ENCODE measurements at regions of chr14 and their contacts with region 1.

Region 1: DNA sequence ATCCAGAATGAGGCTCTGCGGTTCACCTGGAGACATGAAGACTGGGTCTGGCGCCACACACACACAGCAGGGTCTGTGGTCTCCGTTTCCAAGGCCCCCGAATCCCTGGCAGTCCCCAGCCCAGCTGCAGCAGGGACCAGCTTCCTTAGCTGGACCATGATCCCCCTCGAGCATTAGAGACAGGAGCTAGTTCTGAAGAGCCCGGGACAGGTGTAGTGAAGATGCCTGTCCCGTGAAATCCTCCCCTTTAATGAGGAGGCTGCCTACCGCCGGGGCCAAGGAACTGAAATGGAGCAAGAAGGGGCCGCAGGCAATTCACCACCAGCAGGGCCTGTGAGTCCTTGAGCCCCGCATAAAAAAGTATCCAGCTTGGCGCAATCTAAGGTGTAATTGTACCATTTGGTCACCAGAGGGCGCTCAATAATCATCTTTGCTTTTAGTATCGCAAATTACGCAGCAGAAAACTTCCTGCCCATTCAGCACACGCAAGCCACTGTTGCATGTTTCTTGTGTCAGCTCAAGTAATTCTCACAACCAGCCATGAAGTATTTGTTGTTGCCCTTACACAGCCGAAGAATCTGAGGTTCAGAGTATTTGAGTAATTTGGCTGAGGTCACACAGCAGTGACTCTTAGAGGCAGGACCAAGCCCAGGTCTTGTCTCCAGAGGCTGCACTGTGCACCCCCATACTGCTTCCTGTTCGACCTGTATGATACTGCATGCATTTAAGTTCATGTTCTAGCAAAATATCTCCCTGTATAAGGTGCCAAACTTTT is 54.3 kb upstream of the PPP2R5C start:
- DNase-seq: peak; percentile 88
- H3K4me3 Mint-ChIP-seq: no peak overlapping the region
- H3K27ac Mint-ChIP-seq: no peak overlapping the region
- H3K4me1 Mint-ChIP-seq: peaks cover 6% of the 10 kb centered on the region
- H3K27me3 Mint-ChIP-seq: peaks cover 25% of the 10 kb centered on the region
- CTCF ChIP-seq: peak; percentile 86

Region 2: DNA sequence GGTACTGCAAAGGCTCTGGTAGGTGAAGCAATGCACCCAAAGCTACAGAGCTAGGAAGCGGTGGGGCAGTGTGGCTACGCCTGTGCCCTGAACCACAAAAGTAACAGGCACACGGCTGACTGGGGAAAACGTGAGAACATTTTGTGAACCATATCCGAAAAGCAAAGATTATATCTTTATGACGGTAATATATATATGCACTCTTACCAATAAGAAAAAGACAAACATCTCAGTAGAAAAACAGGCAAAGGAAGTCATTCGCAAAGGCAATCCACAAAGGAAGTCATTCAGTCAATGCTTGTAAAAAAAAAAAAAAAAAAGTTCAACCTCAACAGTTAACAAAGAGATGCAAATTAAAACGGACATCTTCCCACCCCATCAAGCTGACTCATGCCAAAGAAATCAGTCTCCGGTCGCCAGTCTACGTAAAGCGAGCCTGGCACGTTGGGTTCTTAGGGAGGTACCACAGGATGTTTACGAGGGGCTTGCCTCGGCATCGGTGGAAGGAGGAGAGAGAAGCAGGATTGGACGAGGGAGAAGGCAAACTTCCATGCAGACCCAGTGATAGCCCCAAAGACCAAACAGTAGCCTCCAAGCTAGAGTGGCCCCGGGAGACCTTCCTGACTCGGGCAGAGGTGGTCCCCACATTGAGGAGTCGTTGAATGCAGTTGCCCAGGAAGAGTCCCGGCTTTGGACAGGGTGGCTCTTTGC is 14.9 kb after region 1 on chr14:
- CTCF ChIA-PET with region 1: interaction called, 5 read pairs
- POLR2A ChIA-PET with region 1: interaction called, 11 read pairs
- intact Hi-C with region 1: no loop called
- DNase-seq: peak; percentile 81
- H3K4me3 Mint-ChIP-seq: peak overlapping the region; percentile 50
- H3K27ac Mint-ChIP-seq: peak overlapping the region; percentile 88
- H3K4me1 Mint-ChIP-seq: peaks cover 10% of the 10 kb centered on the region
- H3K27me3 Mint-ChIP-seq: no peaks in the 10 kb centered on the region
- CTCF ChIP-seq: no peak

Region 3: GRCh38 chr14:101731187-101732080 is 24.2 kb after region 1 on chr14:
- CTCF ChIA-PET with region 1: interaction called, 5 read pairs
- POLR2A ChIA-PET with region 1: interaction called, 14 read pairs
- intact Hi-C with region 1: loop called (anchors 2 kb)
- DNase-seq: peak; percentile 98
- H3K4me3 Mint-ChIP-seq: peak overlapping the region; percentile 71
- H3K27ac Mint-ChIP-seq: peak overlapping the region; percentile 96
- H3K4me1 Mint-ChIP-seq: peaks cover 14% of the 10 kb centered on the region
- H3K27me3 Mint-ChIP-seq: no peaks in the 10 kb centered on the region
- CTCF ChIP-seq: no peak

Region 4: DNA sequence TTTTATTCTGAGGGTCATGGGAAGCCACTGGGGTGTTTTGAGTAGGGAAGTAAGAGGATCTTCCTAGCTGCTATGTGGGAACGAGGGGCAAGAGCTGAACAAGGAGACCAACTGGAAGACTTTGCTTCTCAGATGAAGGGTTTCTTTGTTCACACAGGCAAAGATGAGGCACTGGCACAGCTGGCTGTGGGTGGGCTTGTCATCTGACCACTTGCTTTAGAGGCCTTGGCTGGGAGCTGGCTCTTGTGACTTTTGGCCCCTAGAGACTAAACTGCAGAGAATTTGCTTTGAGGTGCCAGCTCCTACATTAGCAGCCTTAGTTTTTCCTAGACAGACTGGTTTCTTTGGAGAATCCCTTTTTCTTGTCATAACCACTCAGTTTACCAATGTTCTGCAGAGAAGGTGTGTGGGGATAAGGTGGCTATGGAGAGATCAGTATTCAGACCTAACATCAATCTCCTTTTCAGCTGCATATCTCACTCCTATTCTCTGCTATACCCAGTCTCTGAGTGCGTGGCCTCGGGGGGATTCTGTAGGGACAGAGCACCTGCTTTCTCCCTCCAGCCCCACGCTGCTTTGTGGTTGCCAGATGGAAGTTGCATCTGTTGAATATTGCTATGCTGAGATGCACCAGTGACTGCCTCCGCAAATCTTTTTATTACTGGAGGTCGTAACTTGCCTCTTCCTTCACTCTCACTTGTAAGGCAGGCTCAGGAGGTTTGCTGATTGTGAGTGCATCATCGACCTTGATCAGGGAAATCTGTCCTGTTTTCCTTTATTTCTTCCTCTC is 66.9 kb after region 1 on chr14:
- CTCF ChIA-PET with region 1: interaction called, 50 read pairs
- POLR2A ChIA-PET with region 1: interaction called, 8 read pairs
- intact Hi-C with region 1: loop called (anchors 2 kb)
- DNase-seq: no peak
- H3K4me3 Mint-ChIP-seq: no peak overlapping the region
- H3K27ac Mint-ChIP-seq: no peak overlapping the region
- H3K4me1 Mint-ChIP-seq: peaks cover 14% of the 10 kb centered on the region
- H3K27me3 Mint-ChIP-seq: no peaks in the 10 kb centered on the region
- CTCF ChIP-seq: no peak

Region 5: DNA sequence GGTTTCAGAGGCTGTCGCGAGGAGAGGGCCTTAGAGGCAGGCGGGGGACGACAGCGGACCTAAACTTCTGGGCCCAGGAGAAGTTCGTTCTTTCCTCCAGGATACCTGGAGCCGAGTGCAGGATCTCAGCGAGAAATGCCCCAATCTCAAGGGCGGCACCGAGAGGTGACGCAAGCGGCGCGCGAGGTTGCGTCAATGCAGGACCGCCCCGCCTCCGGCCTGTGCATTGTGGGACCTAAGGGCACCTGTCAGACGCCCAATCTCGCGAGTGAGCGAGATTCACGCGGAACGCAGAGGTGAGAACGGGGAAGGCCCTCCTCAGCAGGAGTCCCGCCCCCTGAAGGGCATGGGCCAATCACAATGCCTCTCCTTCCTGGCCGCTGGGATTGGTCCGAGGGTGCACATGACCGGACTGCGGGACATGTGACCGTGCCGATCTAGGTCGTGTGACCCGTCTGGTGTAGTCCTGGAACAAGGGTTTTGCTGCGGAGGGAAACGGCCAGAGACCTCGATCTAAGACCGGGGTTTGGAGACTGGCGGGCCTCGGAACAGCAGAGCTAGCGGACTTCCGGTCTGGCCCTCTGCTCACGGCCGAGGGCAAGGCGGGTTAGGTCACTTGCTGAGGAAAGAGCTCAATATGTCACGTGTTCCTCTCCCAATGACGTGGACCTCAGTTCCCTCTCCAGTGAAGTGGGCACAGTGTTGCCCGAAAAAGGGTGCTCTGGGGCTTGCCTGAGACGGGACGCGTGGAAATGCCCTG is 240.8 kb after region 1 on chr14:
- CTCF ChIA-PET with region 1: no interaction called
- POLR2A ChIA-PET with region 1: interaction called, 5 read pairs
- intact Hi-C with region 1: loop called (anchors 1 kb)
- DNase-seq: peak; percentile 100
- H3K4me3 Mint-ChIP-seq: peak overlapping the region; percentile 94
- H3K27ac Mint-ChIP-seq: peak overlapping the region; percentile 100
- H3K4me1 Mint-ChIP-seq: peaks cover 9% of the 10 kb centered on the region
- H3K27me3 Mint-ChIP-seq: peaks cover 2% of the 10 kb centered on the region
- CTCF ChIP-seq: no peak

Measured in MCF 10A (cell line).